Posterior vena cava (tissue), 2 donors: ENCODE measurements at regions of chr2 and their contacts with region 1.

Region 1: GRCh38 chr2:165022781-165023180 is 67.5 kb upstream of the SLC38A11 start:
- DNase-seq: no peak

Region 2: DNA sequence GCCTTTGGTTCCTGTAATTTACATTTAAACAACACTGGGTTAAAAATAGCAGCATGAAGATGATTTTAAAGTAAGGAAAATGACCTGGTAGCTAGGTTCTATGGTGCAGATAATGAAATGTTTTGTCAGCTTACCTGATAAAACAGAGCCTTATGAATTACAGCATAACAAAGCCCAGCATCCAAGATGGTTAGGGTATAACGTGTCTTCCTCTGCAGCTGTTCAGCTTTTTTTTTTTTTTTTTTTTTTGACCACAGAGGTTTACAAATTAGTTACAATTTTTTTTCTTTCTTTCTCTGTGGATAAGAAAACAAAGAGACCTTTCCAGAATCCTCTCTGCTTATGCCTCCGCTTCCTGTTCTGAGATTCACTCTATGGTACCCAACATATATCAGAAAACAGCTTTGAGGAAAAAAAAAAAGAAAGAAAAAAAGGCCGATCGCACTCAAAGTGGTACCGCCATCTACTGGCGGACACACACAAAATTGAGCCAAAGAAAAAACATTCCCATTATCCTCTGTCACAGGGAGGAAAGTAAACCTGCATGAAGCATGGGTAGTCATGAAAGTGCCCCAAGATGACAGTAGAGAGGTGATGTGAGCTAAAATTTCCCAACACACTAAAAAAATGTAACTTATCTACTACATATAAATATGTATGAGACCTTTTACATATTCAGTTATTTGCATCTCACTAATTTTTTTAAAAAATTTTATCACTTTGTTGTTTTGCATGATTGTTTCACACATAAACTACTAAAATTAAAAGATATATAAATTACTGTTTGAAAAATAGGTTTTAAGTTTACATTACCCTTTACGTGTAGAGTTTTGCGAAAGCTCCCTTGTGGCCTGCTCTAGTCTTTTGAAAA is 181.1 kb after region 1 on chr2 and contains the start of gene SCN3A:
- intact Hi-C with region 1: loop called (anchors 5 to 10 kb)
- DNase-seq: no peak
- total RNA-seq, gene SCN3A: 5.1 to 5.8 TPM